Heart left ventricle (tissue), 16 donors: ENCODE measurements at regions of chr10 and their contacts with region 1.

Region 1: GRCh38 chr10:132142411-132143161 is 44.2 kb upstream of the DPYSL4 start:
- DNase-seq: peak in 4 of 5 donors; percentile 33 to 72 (median 45)
- ATAC-seq: peak; percentile 54 to 84 (median 63)
- H3K4me3 ChIP-seq: no peak overlapping the region
- H3K27ac ChIP-seq: no peak overlapping the region
- H3K4me1 ChIP-seq: peaks cover 0 to 13% (median 0%) of the 10 kb centered on the region in 12 donors
- H3K27me3 ChIP-seq: peaks cover 0 to 12% (median 0%) of the 10 kb centered on the region in 9 donors
- CTCF ChIP-seq: peak; percentile 73 to 94 (median 82)
- POLR2A ChIP-seq: no peak

Region 2: DNA sequence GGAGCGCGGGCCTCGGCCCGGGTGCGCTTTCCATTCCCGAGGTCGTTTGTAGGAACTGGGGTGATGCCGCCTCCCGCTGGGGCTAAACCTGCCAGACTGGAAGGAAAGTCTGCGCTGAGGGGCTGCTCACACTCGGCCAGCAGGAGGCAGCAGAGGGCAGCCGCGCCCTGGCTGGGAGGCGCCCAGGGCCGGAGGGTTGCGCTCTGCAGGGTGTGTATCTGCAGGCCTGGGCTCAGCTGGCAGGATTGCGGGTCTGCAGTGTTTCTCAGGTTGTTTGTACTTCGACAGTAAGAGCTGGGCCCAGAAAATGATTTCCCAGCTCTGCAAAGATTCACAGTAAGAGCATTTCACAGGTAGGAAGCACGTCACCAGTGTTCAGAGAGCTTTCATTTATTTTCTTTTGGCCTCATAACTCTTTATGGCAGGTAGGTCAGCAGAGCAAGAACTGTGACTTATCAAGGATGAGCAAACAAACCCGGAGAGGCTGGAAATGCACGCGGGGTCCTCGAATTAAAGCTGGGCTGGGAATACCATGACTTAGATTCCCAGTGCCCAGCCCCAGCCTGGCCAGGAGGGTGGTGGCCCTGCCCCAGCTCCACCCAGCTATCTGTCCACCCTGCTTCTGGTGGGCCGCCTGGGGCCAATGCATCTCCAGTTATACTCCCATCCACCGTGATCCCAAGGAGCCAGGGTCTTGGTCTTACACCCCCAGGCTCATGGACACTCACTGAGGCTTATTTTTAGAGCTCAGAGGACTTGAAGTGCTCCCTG is 257.0 kb before region 1 on chr10:
- intact Hi-C with region 1: loop called (anchors 2 to 10 kb)
- DNase-seq: peak; percentile 71 to 89 (median 77)
- ATAC-seq: peak; percentile 87 to 98 (median 94)
- H3K4me3 ChIP-seq: no peak overlapping the region
- H3K27ac ChIP-seq: no peak overlapping the region
- H3K4me1 ChIP-seq: peaks cover 0 to 8% (median 5%) of the 10 kb centered on the region in 12 donors
- H3K27me3 ChIP-seq: peaks cover 0 to 28% (median 0%) of the 10 kb centered on the region in 9 donors
- CTCF ChIP-seq: peak; percentile 91 to 99 (median 96)
- POLR2A ChIP-seq: no peak

Region 3: GRCh38 chr10:132023092-132023811 is 119.3 kb before region 1 on chr10:
- intact Hi-C with region 1: loop called in 2 of 10 experiments (anchors 5 kb)
- DNase-seq: peak; percentile 74 to 90 (median 80)
- ATAC-seq: peak; percentile 75 to 97 (median 87)
- H3K4me3 ChIP-seq: peak overlapping the region in 11 of 12 donors; percentile 9 to 53 (median 36)
- H3K27ac ChIP-seq: no peak overlapping the region
- H3K4me1 ChIP-seq: peaks cover 0 to 11% (median 4%) of the 10 kb centered on the region in 12 donors
- H3K27me3 ChIP-seq: peaks cover 0 to 27% (median 4%) of the 10 kb centered on the region in 9 donors
- CTCF ChIP-seq: peak; percentile 85 to 98 (median 90)
- POLR2A ChIP-seq: no peak

Region 4: DNA sequence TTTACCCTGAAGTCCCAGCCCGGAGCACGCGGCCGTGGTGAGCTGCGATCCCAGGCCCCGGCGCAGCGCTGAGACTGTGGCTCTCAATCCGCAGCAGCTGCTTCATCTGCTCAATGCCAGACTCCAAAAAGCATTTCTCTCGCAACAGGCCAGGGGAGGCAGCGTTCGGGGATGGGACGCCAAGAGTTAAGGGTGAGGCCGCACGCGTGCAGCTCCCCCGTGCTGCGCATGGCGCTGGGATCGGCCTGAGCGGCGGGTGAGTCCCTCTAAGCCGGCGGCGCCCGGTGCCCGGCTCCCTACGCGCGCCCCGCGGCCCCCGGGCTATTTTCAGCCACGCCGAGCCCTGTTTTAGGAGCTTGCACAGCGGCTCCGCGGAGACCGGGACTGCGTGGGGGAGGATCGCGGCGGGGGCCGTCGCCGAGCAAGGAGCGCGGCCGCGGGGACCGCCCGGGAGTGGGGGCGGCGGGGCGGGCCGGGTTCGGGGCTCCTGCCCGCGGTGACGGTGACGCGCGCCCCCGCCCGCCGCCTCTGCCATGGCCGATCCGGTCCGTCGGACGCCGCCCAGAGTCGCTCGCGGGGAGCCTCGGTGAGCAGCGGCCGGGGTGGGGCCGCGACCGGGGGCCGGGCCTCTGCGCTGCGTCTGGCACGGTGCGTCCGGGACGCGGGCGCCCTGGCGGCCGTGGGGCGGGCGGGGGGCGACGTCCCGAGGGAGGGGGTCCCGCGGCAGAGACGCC is 106.3 kb before region 1 on chr10:
- intact Hi-C with region 1: loop called in 7 of 10 experiments (anchors 5 to 10 kb)
- DNase-seq: peak in 4 of 5 donors; percentile 17 to 72 (median 44)
- ATAC-seq: peak in 3 of 4 donors; percentile 66 to 76 (median 75)
- H3K4me3 ChIP-seq: peak overlapping the region; percentile 7 to 74 (median 48)
- H3K27ac ChIP-seq: peak overlapping the region in 6 of 12 donors; percentile 8 to 76 (median 48)
- H3K4me1 ChIP-seq: peaks cover 0 to 16% (median 0%) of the 10 kb centered on the region in 12 donors
- H3K27me3 ChIP-seq: peaks cover 0 to 58% (median 6%) of the 10 kb centered on the region in 9 donors
- CTCF ChIP-seq: no peak
- POLR2A ChIP-seq: no peak

Region 5: DNA sequence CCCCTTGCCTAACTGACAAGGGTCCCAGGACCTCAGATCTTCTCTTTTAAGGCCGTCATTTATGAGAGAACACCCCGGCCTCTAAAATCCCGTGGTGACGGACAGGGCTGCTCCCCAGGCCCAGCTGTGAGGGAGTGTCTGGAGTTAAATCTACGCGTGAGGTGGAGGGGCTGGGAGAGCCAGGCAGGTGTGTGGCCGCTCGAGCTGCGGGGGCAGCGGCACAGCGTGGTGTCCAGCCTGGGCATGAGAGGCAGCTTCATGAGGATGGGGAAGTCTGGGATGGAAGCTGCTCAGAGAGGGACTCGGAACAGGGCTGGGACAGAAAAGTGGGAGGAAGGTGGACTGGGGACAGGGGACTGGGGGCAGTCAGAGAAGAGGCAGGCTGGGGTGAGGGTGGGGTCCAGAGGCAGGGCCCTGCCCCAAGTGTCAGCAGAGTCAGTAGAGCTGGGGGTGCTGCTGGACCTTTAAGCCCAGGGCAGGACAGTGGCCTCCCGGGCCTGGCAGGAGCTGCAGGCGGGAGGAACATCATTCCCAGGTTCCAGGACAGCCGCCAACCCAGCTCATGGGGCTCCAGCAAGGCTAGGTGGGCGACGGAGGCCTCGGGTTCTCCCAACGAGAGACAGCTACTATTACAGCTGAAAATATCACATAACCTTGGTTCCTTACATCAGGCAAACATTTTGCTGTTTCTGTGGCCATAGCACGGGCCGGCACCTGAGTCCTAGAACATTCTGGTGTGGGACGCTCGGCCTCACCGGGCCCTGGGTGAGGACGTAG is 21.7 kb before region 1 on chr10:
- intact Hi-C with region 1: no loop called
- DNase-seq: peak in 1 of 5 donors; percentile 28
- ATAC-seq: no peak
- H3K4me3 ChIP-seq: no peak overlapping the region
- H3K27ac ChIP-seq: no peak overlapping the region
- H3K4me1 ChIP-seq: peaks cover 0 to 2% (median 0%) of the 10 kb centered on the region in 12 donors
- H3K27me3 ChIP-seq: no peaks in the 10 kb centered on the region
- CTCF ChIP-seq: no peak
- POLR2A ChIP-seq: no peak